ENCODE measurements at regions of chr9 and their contacts with region 1.

Region 1: GRCh38 chr9:86353655-86354010 is 577 bp downstream of the TUT7 start:
- DNase-seq: peak; percentile 47
- ATAC-seq: no peak
- H3K4me3 Mint-ChIP-seq: peak overlapping the region; percentile 93
- H3K27ac Mint-ChIP-seq: peak overlapping the region; percentile 97
- H3K4me1 Mint-ChIP-seq: peaks cover 30% of the 10 kb centered on the region
- H3K27me3 Mint-ChIP-seq: peaks cover 2% of the 10 kb centered on the region
- CTCF ChIP-seq: no peak

Region 2: DNA sequence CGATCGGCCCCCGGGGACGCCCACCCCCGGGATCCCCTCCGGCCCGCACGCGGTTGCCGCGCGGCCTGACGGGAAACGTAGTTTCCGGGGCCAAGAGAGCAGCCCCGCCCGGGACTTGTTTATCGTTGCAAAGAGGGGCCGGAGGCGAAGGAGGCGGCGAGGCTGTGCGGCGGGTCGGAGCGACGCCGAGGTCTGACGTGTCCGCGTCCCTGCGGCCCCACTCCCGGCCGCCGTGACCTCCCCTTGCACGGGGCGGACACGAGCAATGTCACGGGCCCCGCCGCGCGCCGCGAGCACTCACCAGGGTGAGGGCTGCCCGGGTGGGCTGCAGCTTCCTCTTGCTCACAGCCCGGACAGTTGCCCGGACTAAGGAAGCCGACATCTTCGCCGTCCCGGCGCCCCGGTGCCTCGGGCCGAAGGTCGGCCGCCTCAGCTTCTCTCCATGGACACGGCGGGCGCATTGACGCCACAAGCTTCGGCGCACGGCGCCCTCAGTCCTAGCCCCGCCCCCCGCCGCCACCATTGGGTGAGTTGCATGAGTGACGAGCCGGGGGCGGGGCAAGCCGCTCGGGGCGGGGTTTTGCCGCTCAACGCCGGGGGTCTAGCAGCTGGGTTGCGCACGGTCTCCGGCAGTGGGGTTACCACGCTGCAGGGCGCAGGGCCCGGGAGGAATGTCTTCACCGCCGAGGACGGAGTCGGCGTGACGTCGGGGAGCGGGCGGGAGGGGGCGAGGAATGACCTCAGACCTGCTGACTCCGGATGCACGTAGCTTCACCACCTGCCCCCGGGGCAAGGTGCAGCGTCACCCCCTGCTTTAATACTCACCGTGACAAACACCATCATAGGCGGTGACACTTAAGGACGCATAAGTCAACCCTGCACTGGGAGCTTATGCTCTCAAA is 71.3 kb before region 1 on chr9 and contains the start of gene ISCA1:
- CTCF ChIA-PET with region 1: no interaction called
- POLR2A ChIA-PET with region 1: interaction called, 7 read pairs
- intact Hi-C with region 1: loop called (anchors 2 kb)
- DNase-seq: peak; percentile 99
- ATAC-seq: peak; percentile 85
- H3K4me3 Mint-ChIP-seq: peak within 1 kb of the TSS; percentile 82
- H3K27ac Mint-ChIP-seq: peak within 1 kb of the TSS; percentile 96
- H3K4me1 Mint-ChIP-seq: peaks cover 58% of the 10 kb centered on the region
- H3K27me3 Mint-ChIP-seq: no peaks in the 10 kb centered on the region
- CTCF ChIP-seq: no peak
- total RNA-seq, gene ISCA1: 33.3 to 35.0 TPM

Region 3: GRCh38 chr9:86376016-86376415 is 22.4 kb after region 1 on chr9:
- CTCF ChIA-PET with region 1: no interaction called
- POLR2A ChIA-PET with region 1: no interaction called
- intact Hi-C with region 1: no loop called
- DNase-seq: no peak
- ATAC-seq: no peak
- H3K4me3 Mint-ChIP-seq: no peak overlapping the region
- H3K27ac Mint-ChIP-seq: no peak overlapping the region
- H3K4me1 Mint-ChIP-seq: no peaks in the 10 kb centered on the region
- H3K27me3 Mint-ChIP-seq: peaks cover 9% of the 10 kb centered on the region
- CTCF ChIP-seq: no peak

Region 4: DNA sequence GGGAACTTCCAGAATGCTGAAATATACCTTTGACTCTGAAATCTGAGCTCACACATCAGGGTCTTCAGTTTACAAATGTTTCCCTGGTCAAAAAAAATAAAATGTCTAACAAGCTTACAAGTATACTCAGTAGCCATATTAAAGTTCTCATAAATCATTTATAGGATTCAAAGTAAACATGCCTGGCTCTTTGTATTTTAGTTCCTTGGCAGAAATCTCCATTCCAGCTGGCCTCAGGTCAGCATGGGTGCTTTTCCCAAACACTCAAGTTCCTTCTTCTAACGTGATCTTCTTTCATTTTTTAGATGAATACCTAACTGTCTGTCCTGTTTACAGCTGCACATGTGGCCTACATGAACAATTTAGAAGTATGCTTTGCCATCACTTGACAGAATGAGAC is 330.5 kb after region 1 on chr9:
- CTCF ChIA-PET with region 1: no interaction called
- POLR2A ChIA-PET with region 1: no interaction called
- intact Hi-C with region 1: no loop called
- DNase-seq: no peak
- ATAC-seq: no peak
- H3K4me3 Mint-ChIP-seq: no peak overlapping the region
- H3K27ac Mint-ChIP-seq: no peak overlapping the region
- H3K4me1 Mint-ChIP-seq: no peaks in the 10 kb centered on the region
- H3K27me3 Mint-ChIP-seq: peaks cover 3% of the 10 kb centered on the region
- CTCF ChIP-seq: no peak

Measured in activated CD8-positive, alpha-beta T cell treated with anti-CD3 and anti-CD28 coated beads for 36 hours (primary cell).